Colonic mucosa (tissue), 4 donors: ENCODE measurements at regions of chr4 and their contacts with region 1.

Region 1: GRCh38 chr4:4254666-4255065 is 6.6 kb upstream of the TMEM128 start:
- DNase-seq: no peak
- H3K4me3 ChIP-seq: no peak overlapping the region
- H3K27ac ChIP-seq: no peak overlapping the region
- H3K4me1 ChIP-seq: no peaks in the 10 kb centered on the region
- H3K27me3 ChIP-seq: no peaks in the 10 kb centered on the region
- CTCF ChIP-seq: no peak

Region 2: GRCh38 chr4:4195354-4195753 is 59.3 kb before region 1 on chr4:
- intact Hi-C with region 1: no loop called
- DNase-seq: no peak
- H3K4me3 ChIP-seq: no peak overlapping the region
- H3K27ac ChIP-seq: no peak overlapping the region
- H3K4me1 ChIP-seq: no peaks in the 10 kb centered on the region
- H3K27me3 ChIP-seq: no peaks in the 10 kb centered on the region
- CTCF ChIP-seq: no peak

Region 3: GRCh38 chr4:4334798-4335520 is 80.3 kb after region 1 on chr4:
- intact Hi-C with region 1: loop called (anchors 5 kb)
- DNase-seq: peak; percentile 68
- H3K4me3 ChIP-seq: no peak overlapping the region
- H3K27ac ChIP-seq: no peak overlapping the region
- H3K4me1 ChIP-seq: no peaks in the 10 kb centered on the region
- H3K27me3 ChIP-seq: no peaks in the 10 kb centered on the region
- CTCF ChIP-seq: peak; percentile 54

Region 4: DNA sequence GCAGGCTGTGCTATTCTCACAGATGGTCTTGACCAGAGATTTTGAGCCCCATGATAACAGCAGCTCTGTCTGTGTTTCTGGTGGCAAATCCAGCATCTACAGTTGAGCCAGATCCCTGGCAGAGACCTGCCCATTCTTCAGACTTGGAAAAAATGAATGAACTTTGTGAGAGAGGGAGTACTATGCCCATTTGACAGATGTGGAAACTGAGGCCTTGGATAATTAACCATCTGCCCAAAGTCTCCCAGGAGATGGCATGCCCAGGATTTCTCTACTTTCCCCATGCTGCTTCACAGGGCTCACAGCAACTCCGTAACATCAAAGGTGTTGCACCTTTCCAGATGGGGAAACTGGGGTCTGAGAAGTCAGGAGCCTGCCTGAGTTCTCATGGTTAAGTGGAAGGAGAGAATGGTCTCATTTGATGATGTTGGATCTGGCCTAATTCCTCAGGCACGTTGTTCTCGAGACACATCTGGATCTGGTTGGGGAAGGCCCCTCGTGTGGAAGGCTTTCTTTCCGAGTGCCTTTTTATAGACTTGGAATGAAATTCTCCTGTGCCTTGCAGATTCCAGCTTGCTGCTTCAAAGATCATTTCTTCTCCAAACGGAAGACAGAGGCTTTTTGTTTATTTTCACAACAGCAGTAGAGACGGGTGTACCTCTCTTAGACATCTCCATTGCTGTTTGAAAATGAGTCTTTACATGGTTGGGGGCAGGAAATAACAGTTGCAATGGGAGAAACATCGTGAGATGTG is 360.4 kb after region 1 on chr4:
- intact Hi-C with region 1: no loop called
- DNase-seq: no peak
- H3K4me3 ChIP-seq: no peak overlapping the region
- H3K27ac ChIP-seq: no peak overlapping the region
- H3K4me1 ChIP-seq: no peaks in the 10 kb centered on the region
- H3K27me3 ChIP-seq: no peaks in the 10 kb centered on the region
- CTCF ChIP-seq: no peak